CD4-positive, alpha-beta memory T cell (primary cell): ENCODE measurements at regions of chr13 and their contacts with region 1.

Region 1: GRCh38 chr13:27362064-27362883 is 62.1 kb upstream of the GTF3A start:
- DNase-seq: peak; percentile 62 to 72 (median 66)
- H3K4me3 ChIP-seq: peak overlapping the region in 1 of 2 donors; percentile 17
- H3K4me3 Mint-ChIP-seq: peak overlapping the region in 6 of 8 donors; percentile 31 to 81 (median 46)
- H3K27ac ChIP-seq: no peak overlapping the region
- H3K27ac Mint-ChIP-seq: no peak overlapping the region
- H3K4me1 ChIP-seq: peaks cover 9% of the 10 kb centered on the region
- H3K4me1 Mint-ChIP-seq: peaks cover 0 to 7% (median 2%) of the 10 kb centered on the region in 4 donors
- H3K27me3 ChIP-seq: peaks cover 4% of the 10 kb centered on the region
- H3K27me3 Mint-ChIP-seq: peaks cover 5 to 22% of the 10 kb centered on the region in 2 donors

Region 2: DNA sequence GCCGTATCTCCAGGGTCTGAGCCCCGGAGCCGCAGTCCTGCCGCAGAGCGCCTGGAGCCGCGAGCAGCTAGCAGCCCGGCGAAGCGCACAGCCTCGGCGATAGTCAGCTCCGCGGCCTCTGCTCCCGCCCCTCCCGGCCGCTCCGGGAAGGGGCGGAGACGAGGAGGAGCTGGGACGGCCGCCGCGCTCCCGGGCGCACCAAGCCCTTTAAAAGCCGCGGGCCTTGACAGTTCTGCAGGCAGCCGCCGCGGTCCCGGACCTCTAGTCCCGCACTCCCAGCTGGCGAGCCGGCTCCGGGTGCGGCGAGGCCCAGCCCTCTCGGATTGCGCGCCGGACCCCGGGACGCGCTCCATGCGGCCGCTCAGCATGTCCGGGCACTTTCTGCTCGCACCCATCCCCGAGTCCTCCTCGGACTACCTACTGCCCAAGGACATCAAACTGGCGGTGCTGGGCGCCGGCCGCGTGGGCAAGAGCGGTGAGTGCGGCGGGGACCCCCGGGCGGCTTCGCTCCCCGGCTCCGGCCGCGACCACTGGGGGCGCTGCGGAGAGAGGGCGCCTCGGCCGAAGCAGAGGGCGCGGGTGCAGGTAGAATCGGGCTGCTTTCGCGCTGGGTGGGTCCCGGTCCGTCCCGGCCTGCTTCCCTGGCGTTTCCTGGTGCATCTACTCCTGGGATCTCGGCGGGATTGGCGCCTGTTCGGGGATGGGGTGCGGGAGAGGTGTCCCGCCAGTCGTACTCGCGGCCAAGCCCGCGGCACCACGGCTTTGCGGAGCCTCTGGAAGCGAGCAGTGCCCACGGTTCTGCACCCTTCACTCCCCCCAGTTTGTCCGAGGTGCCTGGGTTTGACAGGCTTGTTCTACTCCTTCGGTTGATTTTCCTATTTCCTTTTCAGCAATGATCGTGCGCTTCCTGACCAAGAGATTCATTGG is 91.4 kb before region 1 on chr13 and contains the start of gene RASL11A:
- CTCF ChIA-PET with region 1: interaction called, 4 read pairs
- POLR2A ChIA-PET with region 1: no interaction called
- intact Hi-C with region 1: loop called (anchors 1 kb)
- DNase-seq: peak; percentile 62 to 76 (median 69)
- H3K4me3 ChIP-seq: peak within 1 kb of the TSS; percentile 58 to 73
- H3K4me3 Mint-ChIP-seq: peak within 1 kb of the TSS; percentile 87 to 93 (median 90)
- H3K27ac ChIP-seq: peak within 1 kb of the TSS; percentile 52
- H3K27ac Mint-ChIP-seq: peak within 1 kb of the TSS in 6 of 7 donors; percentile 25 to 84 (median 70)
- H3K4me1 ChIP-seq: peaks cover 8% of the 10 kb centered on the region
- H3K4me1 Mint-ChIP-seq: peaks cover 7 to 13% (median 11%) of the 10 kb centered on the region in 4 donors
- H3K27me3 ChIP-seq: peaks cover 6% of the 10 kb centered on the region
- H3K27me3 Mint-ChIP-seq: peaks cover 10 to 18% of the 10 kb centered on the region in 2 donors
- total RNA-seq, gene RASL11A: 0.78 to 0.96 TPM

Region 3: GRCh38 chr13:27374650-27375049 is 12.4 kb after region 1 on chr13:
- CTCF ChIA-PET with region 1: interaction called, 75 read pairs
- POLR2A ChIA-PET with region 1: no interaction called
- intact Hi-C with region 1: no loop called
- DNase-seq: peak; percentile 46 to 56 (median 49)
- H3K4me3 ChIP-seq: no peak overlapping the region
- H3K4me3 Mint-ChIP-seq: no peak overlapping the region
- H3K27ac ChIP-seq: no peak overlapping the region
- H3K27ac Mint-ChIP-seq: no peak overlapping the region
- H3K4me1 ChIP-seq: no peaks in the 10 kb centered on the region
- H3K4me1 Mint-ChIP-seq: peaks cover 2 to 10% (median 5%) of the 10 kb centered on the region in 4 donors
- H3K27me3 ChIP-seq: no peaks in the 10 kb centered on the region
- H3K27me3 Mint-ChIP-seq: peaks cover 12 to 22% of the 10 kb centered on the region in 2 donors

Region 4: GRCh38 chr13:27977476-27978300 is 615.4 kb after region 1 on chr13:
- CTCF ChIA-PET with region 1: interaction called, 100 read pairs
- POLR2A ChIA-PET with region 1: no interaction called
- intact Hi-C with region 1: no loop called
- DNase-seq: no peak
- H3K4me3 ChIP-seq: no peak overlapping the region
- H3K4me3 Mint-ChIP-seq: peak overlapping the region in 2 of 8 donors; percentile 54 to 71
- H3K27ac ChIP-seq: no peak overlapping the region
- H3K27ac Mint-ChIP-seq: no peak overlapping the region
- H3K4me1 ChIP-seq: peaks cover 11% of the 10 kb centered on the region
- H3K4me1 Mint-ChIP-seq: peaks cover 9 to 42% (median 21%) of the 10 kb centered on the region in 4 donors
- H3K27me3 ChIP-seq: peaks cover 19% of the 10 kb centered on the region
- H3K27me3 Mint-ChIP-seq: peaks cover 68 to 74% of the 10 kb centered on the region in 2 donors